Activated naive CD4-positive, alpha-beta T cell treated with anti-CD3 and anti-CD28 coated beads, Interleukin-2, amount 10 ng/mL, durations not matched to agents 7 days and 5 days (primary cell): ENCODE measurements at regions of chr11 and their contacts with region 1.

Region 1: DNA sequence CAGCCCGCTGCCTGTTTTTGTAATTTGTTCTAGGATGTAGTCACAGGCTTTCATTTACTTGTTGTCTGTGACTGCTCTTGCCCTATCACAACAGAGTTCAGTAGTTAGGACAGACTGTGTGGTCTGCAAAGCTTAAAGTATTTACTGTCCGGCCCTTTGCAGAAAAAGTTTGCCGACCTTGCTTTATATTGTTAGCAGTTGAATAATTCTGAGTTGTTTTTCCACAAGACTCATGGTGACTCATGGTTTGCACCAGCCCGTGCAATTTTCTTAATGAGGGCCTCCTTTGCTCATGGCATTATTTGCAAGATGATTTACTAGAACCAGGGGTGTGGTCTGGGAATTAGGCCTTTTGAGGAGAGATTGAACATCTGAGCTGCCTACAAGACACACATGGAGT is 110.6 kb downstream of the SCN3B start:
- DNase-seq: no peak
- H3K4me3 Mint-ChIP-seq: no peak overlapping the region
- H3K27ac Mint-ChIP-seq: no peak overlapping the region
- H3K4me1 Mint-ChIP-seq: no peaks in the 10 kb centered on the region
- H3K27me3 Mint-ChIP-seq: no peaks in the 10 kb centered on the region

Region 2: DNA sequence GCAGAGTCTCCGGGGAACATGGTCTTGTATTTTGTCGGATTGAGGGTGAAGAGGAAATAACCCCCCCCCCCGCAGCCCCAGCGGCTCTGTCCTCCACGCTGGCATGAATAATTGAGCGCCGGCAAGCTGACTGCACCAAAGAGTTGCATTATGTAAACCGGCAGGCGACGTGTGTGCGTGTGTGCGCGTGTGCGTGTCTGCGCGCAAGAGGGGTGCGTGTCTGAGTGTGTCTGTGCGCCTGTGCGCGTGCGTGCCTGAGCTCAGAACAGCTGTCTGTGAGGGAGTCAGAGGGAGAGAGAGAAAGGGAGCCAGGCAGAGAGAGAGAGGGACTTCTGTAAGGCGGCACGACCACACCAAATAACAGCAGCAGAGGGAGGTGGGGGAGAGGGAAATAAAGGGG is 16.2 kb after region 1 on chr11:
- CTCF ChIA-PET with region 1: interaction called, 12 read pairs
- DNase-seq: peak; percentile 65
- H3K4me3 Mint-ChIP-seq: peak overlapping the region; percentile 45
- H3K27ac Mint-ChIP-seq: peak overlapping the region; percentile 42
- H3K4me1 Mint-ChIP-seq: peaks cover 19% of the 10 kb centered on the region
- H3K27me3 Mint-ChIP-seq: peaks cover 16% of the 10 kb centered on the region